Naive thymus-derived CD4-positive, alpha-beta T cell (primary cell): ENCODE measurements at regions of chr5 and their contacts with region 1.

Region 1: GRCh38 chr5:99076723-99077640 is 148.2 kb upstream of the CHD1 start:
- DNase-seq: no peak
- ATAC-seq: no peak
- H3K4me3 ChIP-seq: no peak overlapping the region
- H3K4me3 Mint-ChIP-seq: no peak overlapping the region
- H3K27ac ChIP-seq: no peak overlapping the region
- H3K27ac Mint-ChIP-seq: no peak overlapping the region
- H3K4me1 ChIP-seq: no peaks in the 10 kb centered on the region
- H3K4me1 Mint-ChIP-seq: peaks cover 0 to 9% (median 0%) of the 10 kb centered on the region in 7 donors
- H3K27me3 ChIP-seq: no peaks in the 10 kb centered on the region
- H3K27me3 Mint-ChIP-seq: peaks cover 0 to 3% (median 0%) of the 10 kb centered on the region in 5 donors

Region 2: GRCh38 chr5:99109900-99110299 is 32.9 kb after region 1 on chr5:
- CTCF ChIA-PET with region 1: no interaction called
- POLR2A ChIA-PET with region 1: interaction called, 10 read pairs
- intact Hi-C with region 1: no loop called
- DNase-seq: no peak
- ATAC-seq: no peak
- H3K4me3 ChIP-seq: no peak overlapping the region
- H3K4me3 Mint-ChIP-seq: no peak overlapping the region
- H3K27ac ChIP-seq: no peak overlapping the region
- H3K27ac Mint-ChIP-seq: no peak overlapping the region
- H3K4me1 ChIP-seq: no peaks in the 10 kb centered on the region
- H3K4me1 Mint-ChIP-seq: peaks cover 0 to 1% (median 0%) of the 10 kb centered on the region in 7 donors
- H3K27me3 ChIP-seq: peaks cover 0 to 3% of the 10 kb centered on the region in 2 donors
- H3K27me3 Mint-ChIP-seq: peaks cover 0 to 19% (median 0%) of the 10 kb centered on the region in 5 donors